ENCODE measurements at regions of chr2 and their contacts with region 1.

Region 1: GRCh38 chr2:190088917-190089316 is 26.4 kb upstream of the MSTN start:
- DNase-seq: peak; percentile 54 to 70
- H3K4me3 ChIP-seq: no peak overlapping the region
- H3K4me1 ChIP-seq: no peaks in the 10 kb centered on the region
- H3K27me3 ChIP-seq: no peaks in the 10 kb centered on the region

Region 2: GRCh38 chr2:190031971-190032618 is 56.8 kb before region 1 on chr2:
- in situ Hi-C with region 1: no loop called
- DNase-seq: no peak
- H3K4me3 ChIP-seq: no peak overlapping the region
- H3K4me1 ChIP-seq: no peaks in the 10 kb centered on the region
- H3K27me3 ChIP-seq: peaks cover 4% of the 10 kb centered on the region

Region 3: GRCh38 chr2:190379249-190379964 is 290.5 kb after region 1 on chr2:
- in situ Hi-C with region 1: loop called (anchors 10 kb)
- DNase-seq: no peak
- H3K4me3 ChIP-seq: no peak overlapping the region
- H3K4me1 ChIP-seq: no peaks in the 10 kb centered on the region
- H3K27me3 ChIP-seq: no peaks in the 10 kb centered on the region

Region 4: GRCh38 chr2:190511104-190511503 is 422.2 kb after region 1 on chr2:
- in situ Hi-C with region 1: loop called (anchors 25 kb)
- DNase-seq: no peak
- H3K4me3 ChIP-seq: no peak overlapping the region
- H3K4me1 ChIP-seq: no peaks in the 10 kb centered on the region
- H3K27me3 ChIP-seq: no peaks in the 10 kb centered on the region

Measured in HAP-1 (cell line).